ENCODE measurements at regions of chr4 and their contacts with region 1.

Region 1: GRCh38 chr4:8198906-8199593 is at the start of gene SH3TC1:
- DNase-seq: peak; percentile 78
- ATAC-seq: peak; percentile 67
- H3K4me3 Mint-ChIP-seq: peak within 1 kb of the TSS; percentile 97
- H3K27ac Mint-ChIP-seq: peak within 1 kb of the TSS; percentile 96
- H3K4me1 Mint-ChIP-seq: peaks cover 63% of the 10 kb centered on the region
- H3K27me3 Mint-ChIP-seq: no peaks in the 10 kb centered on the region
- CTCF ChIP-seq: no peak
- total RNA-seq, gene SH3TC1: 104 and 135 TPM in 2 replicates

Region 2: DNA sequence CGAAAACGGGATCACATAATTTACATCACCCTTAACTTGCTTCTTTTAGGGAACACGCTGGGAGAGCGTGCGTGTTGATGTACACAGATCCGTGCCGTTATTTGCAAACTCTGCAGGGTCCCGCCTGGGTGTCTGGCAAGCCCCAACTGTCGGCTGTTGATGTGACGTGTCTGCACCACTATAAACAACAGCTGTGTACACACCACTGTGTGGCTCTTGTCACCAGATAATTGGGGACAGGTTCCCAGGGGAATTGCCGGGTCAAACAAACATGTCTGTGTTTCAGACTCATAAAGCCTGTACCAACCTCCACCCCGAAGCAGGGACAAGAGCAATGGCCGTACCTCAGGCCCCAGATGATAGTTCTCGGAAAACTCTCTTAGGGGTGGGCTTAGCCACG is 154.4 kb before region 1 on chr4:
- CTCF ChIA-PET with region 1: no interaction called
- POLR2A ChIA-PET with region 1: no interaction called
- intact Hi-C with region 1: no loop called
- DNase-seq: no peak
- ATAC-seq: no peak
- H3K4me3 Mint-ChIP-seq: no peak overlapping the region
- H3K27ac Mint-ChIP-seq: no peak overlapping the region
- H3K4me1 Mint-ChIP-seq: no peaks in the 10 kb centered on the region
- H3K27me3 Mint-ChIP-seq: peaks cover 8% of the 10 kb centered on the region
- CTCF ChIP-seq: no peak

Region 3: GRCh38 chr4:8221476-8221875 is 22.4 kb after region 1 on chr4:
- CTCF ChIA-PET with region 1: no interaction called
- POLR2A ChIA-PET with region 1: interaction called, 123 read pairs
- intact Hi-C with region 1: no loop called
- DNase-seq: no peak
- ATAC-seq: no peak
- H3K4me3 Mint-ChIP-seq: no peak overlapping the region
- H3K27ac Mint-ChIP-seq: peak overlapping the region; percentile 36
- H3K4me1 Mint-ChIP-seq: peaks cover 20% of the 10 kb centered on the region
- H3K27me3 Mint-ChIP-seq: no peaks in the 10 kb centered on the region
- CTCF ChIP-seq: no peak

Region 4: GRCh38 chr4:8241895-8242696 is 43.0 kb after region 1 on chr4:
- CTCF ChIA-PET with region 1: interaction called, 4 read pairs
- POLR2A ChIA-PET with region 1: interaction called, 7 read pairs
- intact Hi-C with region 1: loop called (anchors 1 kb)
- DNase-seq: peak; percentile 85
- ATAC-seq: peak; percentile 74
- H3K4me3 Mint-ChIP-seq: no peak overlapping the region
- H3K27ac Mint-ChIP-seq: no peak overlapping the region
- H3K4me1 Mint-ChIP-seq: peaks cover 21% of the 10 kb centered on the region
- H3K27me3 Mint-ChIP-seq: no peaks in the 10 kb centered on the region
- CTCF ChIP-seq: peak; percentile 83

Region 5: GRCh38 chr4:8428293-8429097 is 229.4 kb after region 1 on chr4:
- CTCF ChIA-PET with region 1: no interaction called
- POLR2A ChIA-PET with region 1: interaction called, 7 read pairs
- intact Hi-C with region 1: loop called (anchors 1 kb)
- DNase-seq: peak; percentile 98
- ATAC-seq: peak; percentile 95
- H3K4me3 Mint-ChIP-seq: peak overlapping the region; percentile 95
- H3K27ac Mint-ChIP-seq: peak overlapping the region; percentile 93
- H3K4me1 Mint-ChIP-seq: peaks cover 32% of the 10 kb centered on the region
- H3K27me3 Mint-ChIP-seq: no peaks in the 10 kb centered on the region
- CTCF ChIP-seq: no peak